Breast epithelium (tissue), 4 donors: ENCODE measurements at regions of chr15 and their contacts with region 1.

Region 1: DNA sequence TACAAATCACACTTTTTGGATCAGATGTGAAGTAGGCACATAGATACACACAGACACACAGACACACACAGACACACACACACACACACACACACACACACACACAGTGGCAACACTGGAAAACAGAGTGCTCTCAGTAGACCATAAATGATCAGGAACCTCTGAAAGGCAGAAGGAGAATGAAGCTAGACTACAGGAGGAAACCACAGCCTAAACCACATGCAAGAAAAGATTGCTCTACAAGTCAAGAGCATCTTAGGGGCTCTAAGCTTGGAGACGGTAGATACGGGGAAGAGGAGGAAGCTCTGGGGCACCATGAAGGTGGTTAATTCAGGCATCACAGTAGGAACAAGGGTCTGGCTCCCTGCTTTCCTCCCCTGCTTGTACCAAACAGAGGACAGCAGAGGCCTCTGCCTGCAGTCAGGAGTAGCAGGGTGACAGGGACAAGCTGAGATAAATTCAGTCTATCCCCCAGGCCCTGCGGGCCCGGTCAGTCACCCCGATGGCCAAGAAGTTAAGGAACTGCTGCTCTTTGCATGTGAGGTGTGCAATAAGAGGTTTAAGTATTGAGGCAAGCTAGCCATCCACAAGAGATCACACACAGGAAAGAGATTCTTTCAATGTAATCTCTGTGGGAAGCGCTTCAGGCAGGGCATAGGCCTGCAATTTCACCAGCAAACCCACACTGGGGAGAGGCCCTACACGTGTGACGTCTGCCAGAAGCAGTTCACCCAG is 23.5 kb upstream of the ARPIN start:
- DNase-seq: no peak
- H3K4me3 ChIP-seq: no peak overlapping the region
- H3K27ac ChIP-seq: no peak overlapping the region
- H3K4me1 ChIP-seq: no peaks in the 10 kb centered on the region
- H3K27me3 ChIP-seq: no peaks in the 10 kb centered on the region
- CTCF ChIP-seq: no peak
- POLR2A ChIP-seq: no peak

Region 2: GRCh38 chr15:89625716-89626115 is 310.5 kb before region 1 on chr15:
- intact Hi-C with region 1: no loop called
- DNase-seq: no peak
- H3K4me3 ChIP-seq: no peak overlapping the region
- H3K27ac ChIP-seq: no peak overlapping the region
- H3K4me1 ChIP-seq: no peaks in the 10 kb centered on the region
- H3K27me3 ChIP-seq: no peaks in the 10 kb centered on the region
- CTCF ChIP-seq: no peak
- POLR2A ChIP-seq: no peak

Region 3: DNA sequence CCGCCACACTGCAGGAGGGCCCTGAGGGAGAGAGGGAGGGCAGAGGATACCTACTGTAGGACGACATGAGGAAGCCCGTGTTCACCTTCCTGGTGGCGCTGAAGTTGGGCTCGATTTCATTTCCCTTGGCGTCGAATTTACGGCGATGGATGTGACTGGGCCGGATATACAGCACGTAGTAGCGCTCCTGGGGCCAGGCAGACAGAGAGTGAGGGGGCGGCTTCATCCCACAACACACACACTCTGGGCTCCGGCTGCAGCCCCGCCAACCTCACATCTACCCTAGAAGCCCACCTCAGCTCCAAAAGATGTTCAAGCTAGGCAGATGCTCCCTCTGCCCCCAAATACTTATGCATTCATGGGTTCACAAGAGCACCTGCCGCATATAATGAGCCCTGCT is 28.0 kb before region 1 on chr15:
- intact Hi-C with region 1: loop called (anchors 1 kb)
- DNase-seq: no peak
- H3K4me3 ChIP-seq: no peak overlapping the region
- H3K27ac ChIP-seq: no peak overlapping the region
- H3K4me1 ChIP-seq: no peaks in the 10 kb centered on the region
- H3K27me3 ChIP-seq: no peaks in the 10 kb centered on the region
- CTCF ChIP-seq: no peak
- POLR2A ChIP-seq: no peak

Region 4: DNA sequence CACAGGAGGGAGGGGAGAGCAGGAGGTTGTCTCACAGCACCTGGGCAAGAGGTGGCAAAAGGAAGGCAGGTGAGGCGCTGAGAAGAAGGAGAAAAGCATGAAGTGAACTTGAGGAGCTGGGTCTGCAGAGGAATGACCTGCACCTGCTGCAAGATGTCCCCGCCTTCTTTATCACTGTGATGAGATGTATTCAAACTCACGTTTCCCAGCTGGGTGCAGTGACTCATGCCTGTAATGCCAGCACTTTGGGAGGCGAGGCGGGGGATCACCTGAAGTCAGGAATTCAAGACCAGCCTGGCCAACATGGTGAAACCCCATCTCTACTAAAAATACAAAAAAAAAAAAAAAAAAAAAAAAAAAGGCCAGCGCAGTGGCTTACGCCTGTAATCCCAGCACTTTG is 42.7 kb after region 1 on chr15:
- intact Hi-C with region 1: loop called (anchors 2 kb)
- DNase-seq: no peak
- H3K4me3 ChIP-seq: no peak overlapping the region
- H3K27ac ChIP-seq: no peak overlapping the region
- H3K4me1 ChIP-seq: no peaks in the 10 kb centered on the region
- H3K27me3 ChIP-seq: no peaks in the 10 kb centered on the region
- CTCF ChIP-seq: no peak
- POLR2A ChIP-seq: no peak